ENCODE measurements at regions of chr16 and their contacts with region 1.

Region 1: DNA sequence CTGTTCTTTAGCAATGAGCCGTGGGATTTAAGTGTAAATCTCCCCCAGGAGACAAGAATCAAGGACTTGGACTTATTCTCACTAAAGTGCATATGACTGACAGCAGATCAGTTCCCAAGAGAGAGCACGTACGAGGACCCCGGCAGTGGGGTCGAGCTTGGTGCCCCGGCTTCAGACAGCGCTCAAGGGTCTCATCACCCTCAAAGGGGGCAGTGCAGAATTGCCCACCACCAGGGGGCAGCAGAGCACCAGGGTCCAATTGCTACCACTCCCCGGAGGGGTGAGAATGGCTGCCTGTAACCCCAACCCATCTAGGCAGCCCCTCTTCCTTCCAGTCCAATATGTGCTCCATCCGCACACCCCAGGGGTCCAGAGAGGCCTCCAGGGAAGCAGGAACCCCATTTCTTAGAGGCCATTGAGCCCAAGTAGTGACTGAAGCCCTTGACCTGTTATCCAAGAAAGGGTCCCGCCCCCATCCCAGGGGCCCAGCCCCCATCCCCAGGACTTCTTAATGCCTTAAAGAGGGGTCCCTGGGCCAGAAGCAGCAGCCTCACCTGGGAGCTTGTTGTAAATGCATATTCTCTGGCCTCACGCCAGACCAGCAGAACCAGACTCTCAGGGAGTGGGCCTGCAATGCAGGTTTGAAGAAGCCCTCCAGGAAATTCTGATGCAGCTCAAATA is 86.1 kb downstream of the ZDHHC7 start:
- DNase-seq: peak; percentile 40 to 95 (median 75)
- ATAC-seq: peak in 3 of 4 donors; percentile 69 to 79 (median 71)
- H3K4me3 ChIP-seq: no peak overlapping the region
- H3K27ac ChIP-seq: no peak overlapping the region
- H3K4me1 ChIP-seq: no peaks in the 10 kb centered on the region
- H3K27me3 ChIP-seq: no peaks in the 10 kb centered on the region
- CTCF ChIP-seq: peak; percentile 77 to 91 (median 84)

Region 2: GRCh38 chr16:84959784-84960417 is 34.7 kb after region 1 on chr16:
- intact Hi-C with region 1: loop called in 2 of 3 experiments (anchors 5 kb)
- DNase-seq: no peak
- ATAC-seq: no peak
- H3K4me3 ChIP-seq: no peak overlapping the region
- H3K27ac ChIP-seq: no peak overlapping the region
- H3K4me1 ChIP-seq: peaks cover 4 to 11% (median 8%) of the 10 kb centered on the region in 3 donors
- H3K27me3 ChIP-seq: no peaks in the 10 kb centered on the region
- CTCF ChIP-seq: no peak

Region 3: GRCh38 chr16:84967828-84968227 is 42.6 kb after region 1 on chr16:
- intact Hi-C with region 1: loop called in 2 of 3 experiments (anchors 5 kb)
- DNase-seq: peak in 1 of 6 donors; percentile 25
- ATAC-seq: no peak
- H3K4me3 ChIP-seq: no peak overlapping the region
- H3K27ac ChIP-seq: no peak overlapping the region
- H3K4me1 ChIP-seq: peaks cover 0 to 3% (median 0%) of the 10 kb centered on the region in 3 donors
- H3K27me3 ChIP-seq: no peaks in the 10 kb centered on the region
- CTCF ChIP-seq: no peak

Region 4: GRCh38 chr16:85027349-85027957 is 102.2 kb after region 1 on chr16 and contains the start of gene KIAA0513:
- intact Hi-C with region 1: no loop called
- DNase-seq: peak; percentile 91 to 100 (median 97)
- ATAC-seq: peak; percentile 80 to 88 (median 86)
- H3K4me3 ChIP-seq: peak within 1 kb of the TSS; percentile 70 to 98 (median 88)
- H3K27ac ChIP-seq: peak within 1 kb of the TSS; percentile 75 to 88 (median 82)
- H3K4me1 ChIP-seq: peaks cover 0 to 18% (median 7%) of the 10 kb centered on the region in 3 donors
- H3K27me3 ChIP-seq: no peaks in the 10 kb centered on the region
- CTCF ChIP-seq: no peak
- total RNA-seq, gene KIAA0513: 11.3 to 22.1 (median 17.0) TPM

Measured in pancreas (tissue), 10 donors.